PC-9 (cell line): ENCODE measurements at regions of chrX and their contacts with region 1.

Region 1: DNA sequence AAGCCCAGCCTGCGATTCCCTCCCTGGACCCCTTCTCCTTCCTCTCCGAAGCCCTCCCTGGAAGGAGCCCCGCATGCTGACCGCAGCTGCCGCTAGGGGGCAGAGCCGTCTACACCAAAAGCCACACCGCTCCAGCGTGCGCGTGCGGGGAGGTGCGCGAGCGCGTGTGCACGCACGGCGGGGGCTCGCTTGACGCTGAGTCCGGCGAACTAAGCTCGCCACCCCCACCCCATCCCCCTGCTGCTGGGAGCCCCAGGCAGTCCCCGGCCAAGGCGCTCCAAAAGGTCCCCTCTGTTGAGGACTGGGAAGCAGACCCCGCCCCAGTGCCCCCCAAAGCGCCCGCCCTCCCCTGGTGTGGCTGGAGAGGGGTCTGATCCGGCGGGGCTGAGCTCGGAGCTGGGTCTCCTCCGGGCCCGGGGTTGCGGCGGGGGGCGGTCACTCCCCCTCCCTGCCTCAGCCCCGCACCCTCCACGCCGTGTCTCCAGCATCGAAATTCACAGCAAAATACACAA is 11.0 kb upstream of the CCNQ start:
- DNase-seq: peak in 1 of 2 experiments; percentile 74
- H3K4me3 ChIP-seq: no peak overlapping the region
- H3K27ac ChIP-seq: no peak overlapping the region
- H3K4me1 ChIP-seq: no peaks in the 10 kb centered on the region
- H3K27me3 ChIP-seq: peaks cover 71% of the 10 kb centered on the region
- CTCF ChIP-seq: peak; percentile 64

Region 2: DNA sequence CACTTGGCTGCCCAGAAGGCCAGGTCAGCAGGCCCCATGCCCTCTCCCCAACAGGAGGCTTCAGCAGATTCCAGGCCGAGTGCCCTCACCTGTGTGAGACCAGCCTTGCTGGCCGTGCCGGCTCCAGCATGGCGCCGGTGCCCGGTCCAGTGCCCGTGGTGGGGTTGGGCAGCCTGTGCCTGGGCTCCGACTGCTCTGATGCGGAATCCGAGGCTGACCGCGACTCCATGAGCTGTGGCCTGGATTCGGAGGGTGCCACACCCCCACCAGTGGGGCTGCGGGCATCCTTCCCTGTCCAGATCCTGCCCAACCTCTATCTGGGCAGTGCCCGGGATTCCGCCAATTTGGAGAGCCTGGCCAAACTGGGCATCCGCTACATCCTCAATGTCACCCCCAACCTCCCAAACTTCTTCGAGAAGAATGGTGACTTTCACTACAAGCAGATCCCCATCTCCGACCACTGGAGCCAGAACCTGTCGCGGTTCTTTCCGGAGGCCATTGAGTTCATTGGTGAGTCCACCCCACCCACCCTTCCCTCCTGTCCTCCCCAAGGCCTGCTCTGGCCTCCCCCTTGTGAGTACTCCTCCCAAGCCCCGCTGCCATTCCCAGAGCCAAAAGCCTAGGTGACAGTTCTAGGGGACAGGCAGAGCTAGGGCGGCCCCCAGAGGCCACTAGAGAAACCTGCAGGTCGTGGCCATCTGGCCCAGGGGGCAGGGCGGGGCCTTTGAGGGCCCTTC is 39.4 kb after region 1 on chrX:
- CTCF ChIA-PET with region 1: interaction called, 3 read pairs
- POLR2A ChIA-PET with region 1: no interaction called
- intact Hi-C with region 1: loop called (anchors 5 kb)
- DNase-seq: peak; percentile 42 to 49
- H3K4me3 ChIP-seq: no peak overlapping the region
- H3K27ac ChIP-seq: no peak overlapping the region
- H3K4me1 ChIP-seq: peaks cover 9% of the 10 kb centered on the region
- H3K27me3 ChIP-seq: peaks cover 11% of the 10 kb centered on the region
- CTCF ChIP-seq: peak; percentile 62

Region 3: DNA sequence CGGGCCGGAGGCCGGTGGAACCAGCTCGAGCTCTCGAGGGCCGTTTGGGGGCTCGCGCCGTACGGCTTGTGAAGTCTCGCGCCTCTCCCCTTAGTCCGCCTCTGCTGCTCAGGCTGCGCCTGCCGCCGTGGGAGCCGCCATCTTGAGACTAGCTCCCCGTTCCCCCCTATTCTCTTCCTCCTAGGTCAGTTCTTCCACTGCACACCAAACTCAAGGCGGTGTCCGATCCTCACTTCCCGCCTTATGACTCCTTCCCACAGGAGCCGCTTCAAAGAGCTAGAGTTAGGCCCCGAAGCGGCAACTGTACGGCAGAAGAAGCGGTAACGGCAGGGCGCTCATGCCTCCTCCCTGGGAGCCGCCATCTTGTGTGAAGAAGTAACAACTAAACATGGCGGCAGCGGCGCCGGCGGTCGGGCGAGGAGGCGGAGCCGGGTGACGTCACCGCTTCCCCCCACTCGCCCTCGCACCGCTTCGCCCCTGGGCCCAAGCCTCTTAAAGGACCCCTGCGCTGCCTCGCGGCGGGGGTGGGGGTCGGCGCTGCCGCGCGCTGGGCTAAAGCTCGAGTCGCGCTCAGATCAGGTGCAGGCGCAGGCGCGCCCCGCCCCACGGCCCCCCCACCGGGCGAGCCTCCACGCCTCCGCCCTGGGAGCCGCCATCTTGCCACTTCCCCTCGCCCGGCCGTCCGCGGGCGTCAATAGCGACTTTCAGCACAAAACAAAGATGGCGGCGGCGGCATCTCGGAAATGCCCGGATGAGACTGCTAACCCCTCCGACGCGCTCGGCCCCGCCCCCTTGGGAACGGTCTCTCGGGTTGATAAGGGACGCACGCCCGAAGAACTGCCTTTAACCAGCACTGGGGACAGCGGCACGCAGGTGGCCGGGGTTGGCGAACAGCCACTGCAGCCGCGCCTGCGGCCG is 361.7 kb after region 1 on chrX and contains the start of gene HCFC1:
- CTCF ChIA-PET with region 1: no interaction called
- POLR2A ChIA-PET with region 1: no interaction called
- intact Hi-C with region 1: no loop called
- DNase-seq: peak; percentile 75 to 90
- H3K4me3 ChIP-seq: peak within 1 kb of the TSS; percentile 92
- H3K27ac ChIP-seq: peak within 1 kb of the TSS; percentile 99
- H3K4me1 ChIP-seq: peaks cover 13% of the 10 kb centered on the region
- H3K27me3 ChIP-seq: no peaks in the 10 kb centered on the region
- CTCF ChIP-seq: no peak
- total RNA-seq, gene HCFC1: 67.1 and 79.9 TPM in 2 replicates

Region 4: GRCh38 chrX:154348114-154348531 is 738.1 kb after region 1 on chrX:
- CTCF ChIA-PET with region 1: no interaction called
- POLR2A ChIA-PET with region 1: no interaction called
- intact Hi-C with region 1: no loop called
- DNase-seq: peak in 1 of 2 experiments; percentile 19
- H3K4me3 ChIP-seq: no peak overlapping the region
- H3K27ac ChIP-seq: no peak overlapping the region
- H3K4me1 ChIP-seq: no peaks in the 10 kb centered on the region
- H3K27me3 ChIP-seq: no peaks in the 10 kb centered on the region
- CTCF ChIP-seq: no peak